Mammary epithelial cell (primary cell): ENCODE measurements at regions of chr9 and their contacts with region 1.

Region 1: DNA sequence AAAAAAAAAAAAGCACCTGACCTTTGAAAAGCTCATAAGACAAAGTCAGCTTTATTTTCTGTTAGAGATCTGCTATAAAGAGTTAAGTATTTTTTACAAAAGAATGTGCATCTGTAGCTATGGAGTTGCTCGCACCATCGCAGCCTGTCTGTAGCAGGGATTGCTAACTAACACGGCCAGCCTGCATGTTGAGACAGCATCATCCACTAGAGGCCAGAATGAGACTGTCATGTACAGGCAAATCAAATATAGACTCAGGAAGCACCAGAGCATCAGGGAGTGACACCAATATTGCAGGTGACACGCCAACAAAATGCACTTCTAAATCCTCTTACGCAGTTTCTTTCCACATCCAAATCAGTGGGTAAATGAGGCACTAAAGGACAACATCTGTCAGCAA is 136.3 kb upstream of the RASEF start:
- DNase-seq: peak; percentile 46
- H3K4me3 ChIP-seq: no peak overlapping the region
- H3K27ac ChIP-seq: no peak overlapping the region
- H3K4me1 ChIP-seq: no peaks in the 10 kb centered on the region
- H3K27me3 ChIP-seq: peaks cover 1% of the 10 kb centered on the region
- CTCF ChIP-seq: peak; percentile 81 to 89

Region 2: DNA sequence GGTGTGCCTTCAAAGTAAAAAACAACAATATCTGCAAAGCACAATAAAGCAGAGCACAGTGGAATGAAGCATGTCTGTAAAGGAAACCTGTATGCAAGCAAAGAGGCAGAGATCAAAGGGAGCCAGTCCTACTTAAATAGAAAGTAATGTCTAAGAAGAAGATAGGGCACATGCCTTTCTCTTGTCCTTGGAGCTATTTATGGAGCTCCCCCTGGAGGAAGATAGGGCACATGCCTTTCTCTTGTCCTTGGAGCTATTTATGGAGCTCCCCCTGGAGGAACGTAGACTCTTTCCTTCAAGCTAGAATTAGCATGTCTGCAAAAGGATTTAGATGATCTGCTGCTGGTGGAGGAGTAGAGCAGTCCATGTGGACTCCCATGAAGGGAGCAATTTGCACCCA is 31.8 kb after region 1 on chr9:
- CTCF ChIA-PET with region 1: interaction called, 12 read pairs
- dilution Hi-C with region 1: no loop called
- in situ Hi-C with region 1: no loop called
- intact Hi-C with region 1: no loop called
- DNase-seq: no peak
- H3K4me3 ChIP-seq: no peak overlapping the region
- H3K27ac ChIP-seq: no peak overlapping the region
- H3K4me1 ChIP-seq: no peaks in the 10 kb centered on the region
- H3K27me3 ChIP-seq: no peaks in the 10 kb centered on the region
- CTCF ChIP-seq: peak; percentile 61

Region 3: GRCh38 chr9:83544002-83544698 is 344.9 kb after region 1 on chr9:
- CTCF ChIA-PET with region 1: no interaction called
- dilution Hi-C with region 1: no loop called
- in situ Hi-C with region 1: loop called (anchors 10 to 25 kb)
- intact Hi-C with region 1: no loop called
- DNase-seq: peak; percentile 68
- H3K4me3 ChIP-seq: no peak overlapping the region
- H3K27ac ChIP-seq: no peak overlapping the region
- H3K4me1 ChIP-seq: no peaks in the 10 kb centered on the region
- H3K27me3 ChIP-seq: no peaks in the 10 kb centered on the region
- CTCF ChIP-seq: peak; percentile 72 to 83

Region 4: GRCh38 chr9:83596896-83597504 is 397.8 kb after region 1 on chr9:
- CTCF ChIA-PET with region 1: no interaction called
- dilution Hi-C with region 1: no loop called
- in situ Hi-C with region 1: no loop called
- intact Hi-C with region 1: loop called (anchors 1 kb)
- DNase-seq: peak; percentile 15
- H3K4me3 ChIP-seq: no peak overlapping the region
- H3K27ac ChIP-seq: no peak overlapping the region
- H3K4me1 ChIP-seq: no peaks in the 10 kb centered on the region
- H3K27me3 ChIP-seq: no peaks in the 10 kb centered on the region
- CTCF ChIP-seq: peak; percentile 58 to 67